ENCODE measurements at regions of chr1 and their contacts with region 1.

Region 1: GRCh38 chr1:30779294-30780071 is 21.9 kb upstream of the LAPTM5 start:
- DNase-seq: peak; percentile 82 to 91 (median 85)
- H3K4me3 ChIP-seq: no peak overlapping the region
- H3K4me3 Mint-ChIP-seq: peak overlapping the region in 3 of 8 donors; percentile 11 to 35 (median 35)
- H3K27ac ChIP-seq: no peak overlapping the region
- H3K27ac Mint-ChIP-seq: peak overlapping the region in 4 of 7 donors; percentile 39 to 76 (median 64)
- H3K4me1 ChIP-seq: peaks cover 21% of the 10 kb centered on the region
- H3K4me1 Mint-ChIP-seq: peaks cover 5 to 11% (median 8%) of the 10 kb centered on the region in 4 donors
- H3K27me3 ChIP-seq: no peaks in the 10 kb centered on the region
- H3K27me3 Mint-ChIP-seq: peaks cover 0 to 2% of the 10 kb centered on the region in 2 donors

Region 2: GRCh38 chr1:30652152-30652841 is 127.2 kb before region 1 on chr1:
- CTCF ChIA-PET with region 1: no interaction called
- POLR2A ChIA-PET with region 1: no interaction called
- intact Hi-C with region 1: no loop called
- DNase-seq: no peak
- H3K4me3 ChIP-seq: no peak overlapping the region
- H3K4me3 Mint-ChIP-seq: no peak overlapping the region
- H3K27ac ChIP-seq: no peak overlapping the region
- H3K27ac Mint-ChIP-seq: no peak overlapping the region
- H3K4me1 ChIP-seq: no peaks in the 10 kb centered on the region
- H3K4me1 Mint-ChIP-seq: peaks cover 0 to 7% (median 3%) of the 10 kb centered on the region in 4 donors
- H3K27me3 ChIP-seq: no peaks in the 10 kb centered on the region
- H3K27me3 Mint-ChIP-seq: peaks cover 20 to 24% of the 10 kb centered on the region in 2 donors

Region 3: DNA sequence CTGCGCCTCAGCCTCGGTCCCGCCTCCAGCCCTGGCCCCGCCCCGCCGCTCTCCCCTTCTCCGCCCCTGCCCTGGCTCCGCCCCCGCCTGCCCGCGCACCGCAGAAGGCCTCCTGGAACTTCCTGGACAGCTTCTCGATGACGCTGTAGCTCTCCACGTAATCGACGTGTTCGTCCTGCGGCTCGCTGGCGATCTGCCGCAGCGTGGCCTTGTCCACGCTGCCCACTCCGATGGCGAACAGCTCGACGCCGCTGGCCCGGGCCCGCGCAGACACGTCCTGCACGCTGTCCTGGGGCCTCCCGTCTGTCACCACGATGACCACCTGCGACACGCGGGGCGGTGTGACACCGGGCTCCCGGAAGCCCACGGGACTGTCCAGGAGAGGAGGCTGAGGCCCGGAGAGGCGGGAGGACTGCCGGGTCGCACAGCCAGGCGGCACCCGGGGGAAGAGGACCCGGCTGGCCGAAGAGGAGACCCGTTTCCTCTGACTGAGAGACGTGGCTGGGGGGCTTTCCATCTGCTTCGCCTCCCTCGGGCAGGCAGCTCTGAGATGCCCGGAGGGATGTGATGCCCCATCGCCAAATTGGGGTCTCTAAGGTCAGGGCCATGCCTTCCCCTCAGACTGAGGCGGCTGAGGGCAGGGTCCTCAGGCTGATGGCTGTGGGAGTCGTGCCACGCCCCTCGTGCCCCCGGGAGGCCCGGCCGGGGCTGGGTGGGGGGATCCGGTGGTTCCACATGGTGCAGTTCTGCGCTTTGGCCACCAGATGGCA is 60.7 kb before region 1 on chr1:
- CTCF ChIA-PET with region 1: interaction called, 687 read pairs
- POLR2A ChIA-PET with region 1: interaction called, 188 read pairs
- intact Hi-C with region 1: loop called (anchors 1 kb)
- DNase-seq: peak; percentile 79 to 97 (median 96)
- H3K4me3 ChIP-seq: peak overlapping the region; percentile 85 to 94
- H3K4me3 Mint-ChIP-seq: peak overlapping the region; percentile 79 to 94 (median 84)
- H3K27ac ChIP-seq: peak overlapping the region; percentile 100
- H3K27ac Mint-ChIP-seq: peak overlapping the region; percentile 91 to 99 (median 96)
- H3K4me1 ChIP-seq: peaks cover 36% of the 10 kb centered on the region
- H3K4me1 Mint-ChIP-seq: peaks cover 15 to 45% (median 29%) of the 10 kb centered on the region in 4 donors
- H3K27me3 ChIP-seq: no peaks in the 10 kb centered on the region
- H3K27me3 Mint-ChIP-seq: no peaks in the 10 kb centered on the region

Region 4: GRCh38 chr1:30743584-30744059 is 35.9 kb before region 1 on chr1:
- CTCF ChIA-PET with region 1: interaction called, 270 read pairs
- POLR2A ChIA-PET with region 1: interaction called, 27 read pairs
- intact Hi-C with region 1: loop called (anchors 1 kb)
- DNase-seq: peak; percentile 81 to 92 (median 86)
- H3K4me3 ChIP-seq: peak overlapping the region; percentile 30 to 48
- H3K4me3 Mint-ChIP-seq: peak overlapping the region; percentile 77 to 98 (median 89)
- H3K27ac ChIP-seq: peak overlapping the region; percentile 92
- H3K27ac Mint-ChIP-seq: peak overlapping the region; percentile 95 to 99 (median 98)
- H3K4me1 ChIP-seq: peaks cover 96% of the 10 kb centered on the region
- H3K4me1 Mint-ChIP-seq: peaks cover 77 to 99% (median 85%) of the 10 kb centered on the region in 4 donors
- H3K27me3 ChIP-seq: no peaks in the 10 kb centered on the region
- H3K27me3 Mint-ChIP-seq: no peaks in the 10 kb centered on the region

Region 5: DNA sequence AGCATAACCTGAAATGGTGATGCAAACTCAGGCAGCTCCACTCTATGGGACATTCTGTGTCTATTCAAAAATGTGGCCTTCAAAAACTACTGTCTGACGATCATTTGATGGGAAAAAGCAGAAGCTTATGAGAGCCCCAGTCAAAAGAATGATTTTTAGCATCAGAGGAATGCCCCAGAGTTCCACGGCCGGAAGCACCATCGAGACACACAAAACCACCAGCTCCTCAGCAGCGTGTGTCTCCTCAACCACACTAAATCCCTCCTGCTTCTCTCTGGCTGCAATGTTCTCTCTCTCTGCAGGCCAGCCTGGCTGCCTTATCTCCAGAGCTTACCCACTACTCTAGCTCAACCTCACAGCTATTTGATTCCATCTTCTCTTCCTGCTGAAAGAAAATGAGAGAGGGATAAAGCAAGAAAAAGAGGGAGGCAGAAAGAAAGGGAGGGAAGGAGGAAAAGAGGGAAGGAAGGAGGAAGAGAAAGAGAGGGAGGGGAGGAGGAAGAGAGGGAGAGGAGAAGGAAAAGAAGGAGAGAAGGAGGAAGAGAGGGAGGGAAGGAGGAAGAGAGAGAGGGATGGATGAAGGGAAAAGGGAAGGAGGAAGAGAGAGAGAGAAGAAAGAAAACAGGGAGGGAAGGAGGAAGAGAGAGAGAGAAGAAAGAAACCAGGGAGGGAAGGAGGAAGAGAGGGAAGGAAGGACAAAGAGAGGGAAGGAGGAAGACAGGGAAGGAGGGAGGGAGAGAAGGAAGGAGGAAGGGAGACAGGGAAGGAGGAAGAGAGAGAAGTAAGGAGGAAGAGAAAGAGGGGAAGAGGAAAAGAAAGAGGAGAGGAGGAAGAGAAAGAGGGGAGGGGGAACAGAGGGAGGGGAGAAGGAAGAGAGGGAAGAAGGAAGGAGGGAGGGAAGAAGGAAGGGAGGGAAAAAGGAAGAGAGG is 11.6 kb after region 1 on chr1:
- CTCF ChIA-PET with region 1: interaction called, 12 read pairs
- POLR2A ChIA-PET with region 1: no interaction called
- intact Hi-C with region 1: no loop called
- DNase-seq: peak in 4 of 5 donors; percentile 12 to 28 (median 18)
- H3K4me3 ChIP-seq: no peak overlapping the region
- H3K4me3 Mint-ChIP-seq: no peak overlapping the region
- H3K27ac ChIP-seq: no peak overlapping the region
- H3K27ac Mint-ChIP-seq: peak overlapping the region in 4 of 7 donors; percentile 8 to 55 (median 40)
- H3K4me1 ChIP-seq: peaks cover 11% of the 10 kb centered on the region
- H3K4me1 Mint-ChIP-seq: peaks cover 6 to 12% (median 9%) of the 10 kb centered on the region in 4 donors
- H3K27me3 ChIP-seq: no peaks in the 10 kb centered on the region
- H3K27me3 Mint-ChIP-seq: peaks cover 8 to 22% of the 10 kb centered on the region in 2 donors

Region 6: DNA sequence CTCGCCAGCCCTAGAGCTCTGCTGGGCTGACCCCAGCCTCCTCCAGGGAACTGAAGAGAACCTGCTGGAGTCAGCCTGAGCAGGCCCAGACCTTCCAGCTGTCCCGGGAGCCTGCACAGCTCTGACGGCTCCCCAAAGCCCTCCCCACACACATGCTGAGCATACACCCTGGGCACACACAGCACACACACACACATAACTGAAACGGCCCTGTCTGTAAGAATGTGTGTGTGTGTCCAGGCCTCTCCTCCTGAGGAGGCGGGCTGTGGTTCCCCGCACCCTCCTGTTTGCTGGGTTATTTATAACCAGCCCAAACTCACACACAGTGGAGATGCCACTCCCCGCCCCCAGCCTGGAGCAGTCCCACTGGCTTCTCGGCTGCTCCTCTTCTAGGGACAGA is 108.9 kb after region 1 on chr1:
- CTCF ChIA-PET with region 1: no interaction called
- POLR2A ChIA-PET with region 1: no interaction called
- intact Hi-C with region 1: no loop called
- DNase-seq: no peak
- H3K4me3 ChIP-seq: no peak overlapping the region
- H3K4me3 Mint-ChIP-seq: no peak overlapping the region
- H3K27ac ChIP-seq: no peak overlapping the region
- H3K27ac Mint-ChIP-seq: no peak overlapping the region
- H3K4me1 ChIP-seq: no peaks in the 10 kb centered on the region
- H3K4me1 Mint-ChIP-seq: no peaks in the 10 kb centered on the region
- H3K27me3 ChIP-seq: no peaks in the 10 kb centered on the region
- H3K27me3 Mint-ChIP-seq: peaks cover 1 to 19% of the 10 kb centered on the region in 2 donors

Region 7: GRCh38 chr1:30929135-30929889 is 149.8 kb after region 1 on chr1:
- CTCF ChIA-PET with region 1: interaction called, 6 read pairs
- POLR2A ChIA-PET with region 1: no interaction called
- intact Hi-C with region 1: loop called (anchors 5 kb)
- DNase-seq: peak in 4 of 5 donors; percentile 31 to 38 (median 36)
- H3K4me3 ChIP-seq: no peak overlapping the region
- H3K4me3 Mint-ChIP-seq: peak overlapping the region in 1 of 8 donors; percentile 44
- H3K27ac ChIP-seq: no peak overlapping the region
- H3K27ac Mint-ChIP-seq: peak overlapping the region in 3 of 7 donors; percentile 1 to 86 (median 82)
- H3K4me1 ChIP-seq: no peaks in the 10 kb centered on the region
- H3K4me1 Mint-ChIP-seq: peaks cover 0 to 1% (median 0%) of the 10 kb centered on the region in 4 donors
- H3K27me3 ChIP-seq: no peaks in the 10 kb centered on the region
- H3K27me3 Mint-ChIP-seq: peaks cover 0 to 2% of the 10 kb centered on the region in 2 donors